ENCODE measurements at regions of chr9 and their contacts with region 1.

Region 1: GRCh38 chr9:130815242-130815808 is 19.7 kb upstream of the ABL1 start:
- DNase-seq: no peak
- H3K4me3 Mint-ChIP-seq: no peak overlapping the region
- H3K27ac Mint-ChIP-seq: no peak overlapping the region
- H3K4me1 Mint-ChIP-seq: peaks cover 14% of the 10 kb centered on the region
- H3K27me3 Mint-ChIP-seq: no peaks in the 10 kb centered on the region

Region 2: GRCh38 chr9:130765137-130766020 is 49.9 kb before region 1 on chr9:
- CTCF ChIA-PET with region 1: interaction called, 3 read pairs
- POLR2A ChIA-PET with region 1: no interaction called
- intact Hi-C with region 1: loop called (anchors 1 kb)
- DNase-seq: peak; percentile 58
- H3K4me3 Mint-ChIP-seq: no peak overlapping the region
- H3K27ac Mint-ChIP-seq: no peak overlapping the region
- H3K4me1 Mint-ChIP-seq: peaks cover 36% of the 10 kb centered on the region
- H3K27me3 Mint-ChIP-seq: no peaks in the 10 kb centered on the region

Region 3: GRCh38 chr9:130834371-130835311 is 19.3 kb after region 1 on chr9 and contains the start of gene ABL1:
- CTCF ChIA-PET with region 1: no interaction called
- POLR2A ChIA-PET with region 1: interaction called, 6 read pairs
- intact Hi-C with region 1: loop called (anchors 1 kb)
- DNase-seq: peak; percentile 90
- H3K4me3 Mint-ChIP-seq: peak within 1 kb of the TSS; percentile 86
- H3K27ac Mint-ChIP-seq: peak within 1 kb of the TSS; percentile 82
- H3K4me1 Mint-ChIP-seq: peaks cover 27% of the 10 kb centered on the region
- H3K27me3 Mint-ChIP-seq: no peaks in the 10 kb centered on the region
- total RNA-seq, gene ABL1: 24.8 to 24.9 TPM

Region 4: DNA sequence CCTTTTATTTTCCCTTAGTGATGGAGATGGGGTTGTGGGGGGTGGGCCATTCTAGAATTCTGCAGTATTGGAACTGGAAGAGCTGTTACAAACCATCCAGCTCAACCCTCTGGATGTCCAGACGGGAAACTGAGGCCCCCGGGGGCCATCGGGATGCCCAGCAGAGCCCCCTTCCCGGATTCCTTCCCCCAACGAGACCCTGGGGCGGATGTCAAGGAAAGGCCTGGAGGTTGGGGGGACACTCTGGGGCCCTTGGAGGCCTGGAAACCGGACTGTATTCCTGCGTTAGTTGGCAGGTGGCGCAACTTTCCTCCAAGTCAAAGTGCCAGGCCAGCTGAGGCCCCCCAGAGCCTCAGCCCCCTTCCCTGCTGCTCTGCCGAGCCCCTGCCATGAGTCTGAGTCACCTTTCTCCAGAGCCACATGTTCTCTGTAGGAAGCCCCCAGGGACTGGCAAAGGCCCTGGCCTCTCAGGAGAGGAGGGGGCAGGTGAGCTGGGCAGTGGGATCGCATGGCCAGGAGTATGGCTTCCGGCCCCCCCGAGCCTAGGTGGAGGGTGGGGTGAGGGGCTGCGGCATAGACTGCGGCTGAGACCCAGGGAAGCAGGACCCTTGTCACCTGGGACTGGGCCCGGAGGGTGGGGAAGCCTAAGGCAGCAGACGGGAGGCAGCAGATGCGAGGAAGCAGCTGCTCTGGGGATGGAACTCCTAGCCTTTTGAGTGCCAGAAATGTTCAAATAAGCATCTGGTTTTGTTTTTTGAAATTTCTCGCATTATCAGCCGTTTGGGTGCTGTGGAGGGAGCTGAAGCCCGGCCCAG is 141.5 kb after region 1 on chr9:
- CTCF ChIA-PET with region 1: no interaction called
- POLR2A ChIA-PET with region 1: no interaction called
- intact Hi-C with region 1: no loop called
- DNase-seq: no peak
- H3K4me3 Mint-ChIP-seq: no peak overlapping the region
- H3K27ac Mint-ChIP-seq: no peak overlapping the region
- H3K4me1 Mint-ChIP-seq: no peaks in the 10 kb centered on the region
- H3K27me3 Mint-ChIP-seq: peaks cover 7% of the 10 kb centered on the region

Region 5: GRCh38 chr9:131349881-131350563 is 534.7 kb after region 1 on chr9:
- CTCF ChIA-PET with region 1: no interaction called
- POLR2A ChIA-PET with region 1: no interaction called
- intact Hi-C with region 1: no loop called
- DNase-seq: peak; percentile 92
- H3K4me3 Mint-ChIP-seq: no peak overlapping the region
- H3K27ac Mint-ChIP-seq: no peak overlapping the region
- H3K4me1 Mint-ChIP-seq: peaks cover 5% of the 10 kb centered on the region
- H3K27me3 Mint-ChIP-seq: no peaks in the 10 kb centered on the region

Measured in activated CD4-positive, alpha-beta memory T cell treated with anti-CD3 and anti-CD28 coated beads for 36 hours (primary cell).